HepG2 (cell line): ENCODE measurements at regions of chr5 and their contacts with region 1.

Region 1: GRCh38 chr5:28014779-28015178 is 976.4 kb upstream of the CDH9 start:
- DNase-seq: peak; percentile 48
- ATAC-seq: peak; percentile 59
- H3K4me3 ChIP-seq: no peak overlapping the region
- H3K27ac ChIP-seq: no peak overlapping the region
- H3K4me1 ChIP-seq: no peaks in the 10 kb centered on the region
- H3K27me3 ChIP-seq: no peaks in the 10 kb centered on the region; a peak in 1 of 5 replicates
- CTCF ChIP-seq: peak; percentile 67
- EP300 ChIP-seq: no peak
- POLR2A ChIP-seq: no peak
- RAD21 ChIP-seq: no peak

Region 2: DNA sequence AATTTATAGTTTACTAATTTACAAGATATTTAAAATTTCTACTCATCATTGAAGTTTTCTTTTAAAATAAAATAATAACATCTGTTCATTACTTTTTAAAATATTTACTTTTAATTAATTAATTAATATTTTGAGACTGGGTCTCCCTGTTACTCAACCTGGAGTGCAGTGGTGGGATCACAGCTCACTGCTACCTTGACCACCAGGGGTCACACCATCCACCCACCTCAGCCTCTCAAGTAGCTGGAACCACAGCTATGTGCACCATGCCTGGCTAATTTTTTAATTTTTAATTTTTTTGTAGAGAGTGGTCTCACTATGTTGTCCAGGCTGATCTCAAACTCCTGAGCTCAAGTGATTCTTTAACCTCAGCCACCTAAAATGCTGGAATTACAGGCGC is 1990.0 kb before region 1 on chr5:
- CTCF ChIA-PET with region 1: no interaction called
- POLR2A ChIA-PET with region 1: no interaction called
- in situ Hi-C with region 1: no loop called
- intact Hi-C with region 1: loop called (anchors 10 kb)
- DNase-seq: peak; percentile 5
- ATAC-seq: peak; percentile 46; the same call in 1 of the 3 replicates
- H3K4me3 ChIP-seq: no peak overlapping the region
- H3K27ac ChIP-seq: no peak overlapping the region
- H3K4me1 ChIP-seq: no peaks in the 10 kb centered on the region
- H3K27me3 ChIP-seq: no peaks in the 10 kb centered on the region
- CTCF ChIP-seq: 0 out of 2 replicates have a peak, but pooled peaks have one; percentile 24
- EP300 ChIP-seq: no peak
- POLR2A ChIP-seq: no peak
- RAD21 ChIP-seq: no peak

Region 3: GRCh38 chr5:26791433-26791832 is 1223.3 kb before region 1 on chr5:
- CTCF ChIA-PET with region 1: no interaction called
- POLR2A ChIA-PET with region 1: no interaction called
- in situ Hi-C with region 1: no loop called
- intact Hi-C with region 1: no loop called
- DNase-seq: no peak
- ATAC-seq: no peak
- H3K4me3 ChIP-seq: no peak overlapping the region
- H3K27ac ChIP-seq: no peak overlapping the region
- H3K4me1 ChIP-seq: no peaks in the 10 kb centered on the region
- H3K27me3 ChIP-seq: no peaks in the 10 kb centered on the region
- CTCF ChIP-seq: no peak
- EP300 ChIP-seq: no peak
- POLR2A ChIP-seq: no peak
- RAD21 ChIP-seq: no peak

Region 4: GRCh38 chr5:27020973-27021372 is 993.8 kb before region 1 on chr5:
- CTCF ChIA-PET with region 1: no interaction called
- POLR2A ChIA-PET with region 1: no interaction called
- in situ Hi-C with region 1: loop called (anchors 25 kb)
- intact Hi-C with region 1: loop called (anchors 1 kb)
- DNase-seq: peak; percentile 2
- ATAC-seq: no peak
- H3K4me3 ChIP-seq: no peak overlapping the region
- H3K27ac ChIP-seq: no peak overlapping the region
- H3K4me1 ChIP-seq: no peaks in the 10 kb centered on the region
- H3K27me3 ChIP-seq: no peaks in the 10 kb centered on the region
- CTCF ChIP-seq: peak; percentile 33
- EP300 ChIP-seq: no peak
- POLR2A ChIP-seq: no peak
- RAD21 ChIP-seq: no peak

Region 5: GRCh38 chr5:27124590-27124989 is 890.2 kb before region 1 on chr5:
- CTCF ChIA-PET with region 1: no interaction called
- POLR2A ChIA-PET with region 1: no interaction called
- in situ Hi-C with region 1: no loop called
- intact Hi-C with region 1: loop called (anchors 5 kb)
- DNase-seq: peak; percentile 20
- ATAC-seq: peak; percentile 84
- H3K4me3 ChIP-seq: no peak overlapping the region
- H3K27ac ChIP-seq: no peak overlapping the region
- H3K4me1 ChIP-seq: peaks cover 12% of the 10 kb centered on the region; the same call in 1 of the 2 replicates
- H3K27me3 ChIP-seq: no peaks in the 10 kb centered on the region
- CTCF ChIP-seq: 0 out of 2 replicates have a peak, but pooled peaks have one; percentile 20
- EP300 ChIP-seq: no peak
- POLR2A ChIP-seq: no peak
- RAD21 ChIP-seq: no peak

Region 6: DNA sequence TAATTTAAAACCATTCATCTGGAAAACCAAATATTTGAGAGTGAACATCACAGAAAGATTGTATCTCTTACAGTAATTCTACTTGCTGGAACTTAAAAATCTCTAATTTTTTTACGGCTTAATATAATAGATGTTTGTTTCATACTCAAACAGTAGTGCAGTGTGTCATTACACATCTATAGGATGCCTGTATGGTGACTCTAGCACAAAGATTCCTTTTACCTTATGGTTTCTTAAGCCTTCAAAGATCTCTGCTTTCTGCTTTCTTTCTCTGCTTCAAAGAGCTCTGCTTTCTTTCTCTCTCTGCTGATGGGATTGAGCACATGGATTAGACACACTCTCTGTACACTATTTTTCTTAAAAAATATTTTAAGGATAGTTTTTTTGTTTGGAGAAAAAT is 602.4 kb before region 1 on chr5:
- CTCF ChIA-PET with region 1: no interaction called
- POLR2A ChIA-PET with region 1: no interaction called
- in situ Hi-C with region 1: no loop called
- intact Hi-C with region 1: no loop called
- DNase-seq: no peak
- ATAC-seq: no peak
- H3K4me3 ChIP-seq: no peak overlapping the region
- H3K27ac ChIP-seq: no peak overlapping the region
- H3K4me1 ChIP-seq: no peaks in the 10 kb centered on the region
- H3K27me3 ChIP-seq: no peaks in the 10 kb centered on the region
- CTCF ChIP-seq: no peak
- EP300 ChIP-seq: no peak
- POLR2A ChIP-seq: no peak
- RAD21 ChIP-seq: no peak

Region 7: GRCh38 chr5:27652501-27652900 is 362.3 kb before region 1 on chr5:
- CTCF ChIA-PET with region 1: interaction called, 4 read pairs
- POLR2A ChIA-PET with region 1: no interaction called
- in situ Hi-C with region 1: no loop called
- intact Hi-C with region 1: loop called (anchors 1 kb)
- DNase-seq: peak; percentile 17
- ATAC-seq: peak; percentile 92
- H3K4me3 ChIP-seq: no peak overlapping the region
- H3K27ac ChIP-seq: no peak overlapping the region
- H3K4me1 ChIP-seq: no peaks in the 10 kb centered on the region
- H3K27me3 ChIP-seq: no peaks in the 10 kb centered on the region
- CTCF ChIP-seq: peak; percentile 57
- EP300 ChIP-seq: no peak
- POLR2A ChIP-seq: no peak
- RAD21 ChIP-seq: no peak

Region 8: DNA sequence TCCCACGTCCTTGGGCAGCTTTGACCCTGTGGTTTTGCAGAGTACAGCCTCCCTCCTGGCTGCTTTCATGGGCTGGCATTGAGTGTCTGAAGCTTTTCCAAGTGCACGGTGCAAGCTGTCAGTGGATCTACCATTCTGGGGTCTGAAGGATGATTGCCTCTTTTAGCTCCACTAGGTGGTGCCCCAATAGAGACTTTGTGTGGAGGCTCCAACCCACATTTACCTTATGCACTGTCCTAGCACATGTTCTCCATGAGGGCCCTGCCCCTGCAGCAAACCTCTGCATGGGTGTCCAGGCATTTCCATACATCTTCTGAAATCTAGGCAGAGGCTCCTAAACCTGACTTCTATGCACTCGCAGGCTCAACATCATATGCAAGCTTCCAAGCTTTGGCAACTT is 332.2 kb before region 1 on chr5:
- CTCF ChIA-PET with region 1: interaction called, 8 read pairs
- POLR2A ChIA-PET with region 1: no interaction called
- in situ Hi-C with region 1: loop called (anchors 5 kb)
- intact Hi-C with region 1: no loop called
- DNase-seq: peak; percentile 9
- ATAC-seq: peak; percentile 94
- H3K4me3 ChIP-seq: no peak overlapping the region
- H3K27ac ChIP-seq: no peak overlapping the region
- H3K4me1 ChIP-seq: no peaks in the 10 kb centered on the region
- H3K27me3 ChIP-seq: no peaks in the 10 kb centered on the region
- CTCF ChIP-seq: peak; percentile 43
- EP300 ChIP-seq: no peak
- POLR2A ChIP-seq: no peak
- RAD21 ChIP-seq: no peak

Region 9: DNA sequence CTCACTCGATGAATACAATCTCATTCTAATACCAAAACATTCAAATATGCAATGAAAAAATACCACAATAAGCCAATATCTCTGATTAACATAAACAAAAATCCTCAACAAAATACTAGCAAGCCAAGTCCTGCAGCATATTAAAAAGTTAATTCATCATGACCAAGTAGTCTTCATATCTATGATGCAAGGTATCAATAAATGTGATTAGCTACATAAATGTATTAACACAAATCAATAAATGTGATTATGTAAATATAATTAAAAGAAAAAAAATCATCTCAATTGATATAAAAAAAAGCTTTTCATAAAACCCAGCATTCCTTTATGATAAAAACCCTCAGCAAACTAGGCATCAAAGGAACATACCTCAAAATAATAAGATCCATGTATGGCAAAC is 149.2 kb before region 1 on chr5:
- CTCF ChIA-PET with region 1: no interaction called
- POLR2A ChIA-PET with region 1: no interaction called
- in situ Hi-C with region 1: no loop called
- intact Hi-C with region 1: no loop called
- DNase-seq: no peak
- ATAC-seq: no peak
- H3K4me3 ChIP-seq: no peak overlapping the region
- H3K27ac ChIP-seq: no peak overlapping the region
- H3K4me1 ChIP-seq: no peaks in the 10 kb centered on the region
- H3K27me3 ChIP-seq: no peaks in the 10 kb centered on the region
- CTCF ChIP-seq: no peak
- EP300 ChIP-seq: no peak
- POLR2A ChIP-seq: no peak
- RAD21 ChIP-seq: no peak

Region 10: GRCh38 chr5:28027851-28028250 is 13.1 kb after region 1 on chr5:
- CTCF ChIA-PET with region 1: no interaction called
- POLR2A ChIA-PET with region 1: no interaction called
- in situ Hi-C with region 1: no loop called
- intact Hi-C with region 1: no loop called
- DNase-seq: no peak
- ATAC-seq: no peak
- H3K4me3 ChIP-seq: no peak overlapping the region
- H3K27ac ChIP-seq: no peak overlapping the region
- H3K4me1 ChIP-seq: no peaks in the 10 kb centered on the region
- H3K27me3 ChIP-seq: no peaks in the 10 kb centered on the region
- CTCF ChIP-seq: no peak
- EP300 ChIP-seq: no peak
- POLR2A ChIP-seq: no peak
- RAD21 ChIP-seq: no peak